ENCODE measurements at regions of chr3 and their contacts with region 1.

Region 1: DNA sequence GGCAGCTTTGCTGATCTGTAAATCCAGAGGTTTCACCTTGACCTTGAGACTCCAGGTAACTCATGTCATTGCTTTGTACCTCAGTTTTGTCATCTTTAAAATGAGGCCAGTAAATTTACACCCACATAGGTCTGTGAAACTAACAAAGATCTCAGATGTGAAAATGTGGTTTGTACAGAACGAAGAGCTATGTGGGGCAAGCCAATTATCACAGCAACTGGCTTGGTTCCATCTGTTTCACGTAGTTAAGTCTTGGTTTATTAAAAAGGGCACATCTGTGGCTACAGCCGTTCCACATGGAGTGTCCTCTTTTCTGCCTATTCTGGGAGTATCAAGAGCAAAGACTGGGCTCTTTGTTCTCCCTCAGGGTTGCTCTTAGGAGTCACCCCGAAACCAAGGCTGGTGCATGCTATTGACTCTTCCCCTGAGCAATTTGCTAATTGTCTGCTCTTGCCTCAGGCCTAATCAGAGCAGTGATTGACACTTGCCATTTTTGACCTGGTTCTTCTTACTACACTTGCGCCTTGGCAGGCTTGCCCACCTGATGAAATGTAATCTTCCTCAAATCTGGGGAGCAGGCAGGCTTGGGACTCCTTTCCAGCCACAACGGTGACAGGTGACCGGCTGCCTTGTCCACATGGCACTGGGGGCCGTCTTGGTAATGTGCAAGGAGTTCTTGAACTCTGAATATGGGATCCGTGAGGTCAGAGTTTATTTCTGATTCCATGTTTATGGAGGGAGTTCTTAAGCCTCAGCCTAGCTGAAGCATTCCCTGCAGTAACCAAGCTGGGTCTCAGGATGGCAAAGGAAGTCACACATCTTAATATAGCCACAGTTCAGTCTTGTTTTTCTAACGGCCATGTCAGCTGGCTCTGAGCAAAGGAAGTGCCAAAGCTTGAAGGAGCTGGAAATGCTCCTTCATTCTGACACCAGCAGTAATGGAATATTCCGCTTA is 40.1 kb downstream of the EAF1 start:
- DNase-seq: peak; percentile 85
- ATAC-seq: peak; percentile 97
- H3K4me3 ChIP-seq: no peak overlapping the region
- H3K27ac ChIP-seq: no peak overlapping the region
- H3K4me1 ChIP-seq: peaks cover 6% of the 10 kb centered on the region
- H3K27me3 ChIP-seq: no peaks in the 10 kb centered on the region
- CTCF ChIP-seq: no peak
- EP300 ChIP-seq: peak; percentile 66 to 78; a peak in 2 of 4 replicates
- POLR2A ChIP-seq: no peak
- RAD21 ChIP-seq: no peak

Region 2: DNA sequence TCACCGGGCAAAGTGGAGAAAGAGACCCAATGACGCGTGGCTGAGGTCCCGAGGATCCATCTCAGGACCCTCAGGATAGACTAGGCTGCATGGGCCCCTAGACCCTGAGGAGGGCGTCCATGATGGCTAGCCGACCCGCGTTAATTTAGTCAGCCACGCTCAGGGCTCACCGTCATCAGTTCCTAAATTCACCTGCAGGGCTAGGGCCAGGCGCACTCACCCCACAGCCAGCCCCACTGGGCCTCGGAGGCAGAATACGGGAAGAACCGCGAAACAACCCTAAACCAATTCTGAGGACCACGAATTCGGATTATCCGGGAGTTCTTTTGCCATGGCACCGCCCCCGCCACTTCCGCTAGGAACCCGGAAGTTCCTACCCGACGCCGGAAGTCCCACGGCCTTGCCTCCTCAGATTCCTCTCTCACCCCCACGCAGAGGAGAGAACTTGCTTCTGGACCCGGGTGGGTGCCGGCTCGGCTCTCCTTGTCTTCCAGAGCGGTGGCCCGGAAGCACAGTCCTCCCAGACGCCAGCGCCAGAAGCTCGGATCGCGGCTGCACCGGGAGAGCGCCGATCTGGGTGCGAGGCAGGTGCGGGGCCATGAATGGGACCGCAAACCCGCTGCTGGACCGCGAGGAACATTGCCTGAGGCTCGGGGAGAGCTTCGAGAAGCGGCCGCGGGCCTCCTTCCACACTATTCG is 40.2 kb before region 1 on chr3 and contains the starts of genes EAF1 and METTL6:
- CTCF ChIA-PET with region 1: interaction called, 6 read pairs
- POLR2A ChIA-PET with region 1: interaction called, 3 read pairs
- RAD21 ChIA-PET with region 1: interaction called, 9 read pairs
- SMC1A ChIA-PET with region 1: interaction called, 22 read pairs
- in situ Hi-C with region 1: no loop called
- intact Hi-C with region 1: no loop called
- DNase-seq: peak; percentile 38
- ATAC-seq: peak; percentile 88
- H3K4me3 ChIP-seq: peak within 1 kb of the TSS; percentile 95
- H3K27ac ChIP-seq: peak within 1 kb of the TSS; percentile 81
- H3K4me1 ChIP-seq: no peaks in the 10 kb centered on the region; the same call in 1 of the 2 replicates
- H3K27me3 ChIP-seq: no peaks in the 10 kb centered on the region
- CTCF ChIP-seq: peak in 1 of 3 experiments; percentile 15; a peak in 1 of 6 replicates
- EP300 ChIP-seq: 0 out of 4 replicates have a peak, but pooled peaks of 1 of the 2 experiments have one; percentile 10
- POLR2A ChIP-seq: peak; percentile 85
- RAD21 ChIP-seq: no peak
- polyA plus RNA-seq, gene EAF1: 6.8 to 9.2 TPM
- polyA plus RNA-seq, gene METTL6: 27.4 to 29.6 TPM

Region 3: DNA sequence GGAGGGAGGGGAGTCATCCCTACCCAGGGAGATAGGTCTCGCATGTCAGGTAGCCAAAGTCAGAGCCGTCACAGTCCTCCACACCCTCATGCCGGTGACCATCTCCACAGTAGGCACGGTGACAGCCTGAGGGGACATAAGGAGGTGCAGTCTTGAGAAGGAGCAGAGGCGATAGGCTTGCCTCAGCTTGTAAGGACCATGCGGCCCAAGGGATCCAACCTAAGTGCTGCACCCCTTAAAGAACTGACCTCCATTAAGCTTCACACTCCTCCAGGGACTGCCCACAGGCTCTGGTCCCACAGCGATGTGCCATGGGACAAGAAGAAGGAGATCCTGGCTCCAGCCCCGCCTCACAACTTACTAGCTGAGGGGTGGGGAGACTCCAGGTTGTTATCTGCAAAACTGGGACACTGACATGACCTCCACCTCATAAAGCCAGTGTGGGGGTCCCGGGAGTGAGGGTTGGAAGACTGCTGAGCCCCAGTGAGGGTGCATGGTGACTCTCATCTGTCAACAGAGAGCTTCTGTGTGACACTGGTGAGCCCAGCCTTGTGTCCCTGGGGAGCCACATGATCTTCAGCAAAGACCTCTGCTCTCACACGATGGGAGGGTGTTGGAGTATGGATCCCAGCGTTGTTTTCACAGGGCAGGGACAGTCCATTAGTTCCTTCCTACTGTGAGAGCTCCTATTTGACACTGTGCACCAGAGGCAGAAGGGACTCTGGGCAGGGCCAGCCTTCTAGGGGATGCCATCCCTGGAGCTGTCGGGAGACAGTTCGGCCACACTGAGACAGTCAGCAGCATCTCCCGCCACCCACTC is 13.5 kb before region 1 on chr3:
- CTCF ChIA-PET with region 1: interaction called, 10 read pairs
- POLR2A ChIA-PET with region 1: interaction called, 5 read pairs
- RAD21 ChIA-PET with region 1: interaction called, 3 read pairs
- SMC1A ChIA-PET with region 1: interaction called, 5 read pairs
- in situ Hi-C with region 1: no loop called
- intact Hi-C with region 1: no loop called
- DNase-seq: no peak
- ATAC-seq: no peak
- H3K4me3 ChIP-seq: no peak overlapping the region
- H3K27ac ChIP-seq: no peak overlapping the region
- H3K4me1 ChIP-seq: no peaks in the 10 kb centered on the region
- H3K27me3 ChIP-seq: no peaks in the 10 kb centered on the region
- CTCF ChIP-seq: no peak
- EP300 ChIP-seq: no peak
- POLR2A ChIP-seq: no peak
- RAD21 ChIP-seq: no peak

Region 4: DNA sequence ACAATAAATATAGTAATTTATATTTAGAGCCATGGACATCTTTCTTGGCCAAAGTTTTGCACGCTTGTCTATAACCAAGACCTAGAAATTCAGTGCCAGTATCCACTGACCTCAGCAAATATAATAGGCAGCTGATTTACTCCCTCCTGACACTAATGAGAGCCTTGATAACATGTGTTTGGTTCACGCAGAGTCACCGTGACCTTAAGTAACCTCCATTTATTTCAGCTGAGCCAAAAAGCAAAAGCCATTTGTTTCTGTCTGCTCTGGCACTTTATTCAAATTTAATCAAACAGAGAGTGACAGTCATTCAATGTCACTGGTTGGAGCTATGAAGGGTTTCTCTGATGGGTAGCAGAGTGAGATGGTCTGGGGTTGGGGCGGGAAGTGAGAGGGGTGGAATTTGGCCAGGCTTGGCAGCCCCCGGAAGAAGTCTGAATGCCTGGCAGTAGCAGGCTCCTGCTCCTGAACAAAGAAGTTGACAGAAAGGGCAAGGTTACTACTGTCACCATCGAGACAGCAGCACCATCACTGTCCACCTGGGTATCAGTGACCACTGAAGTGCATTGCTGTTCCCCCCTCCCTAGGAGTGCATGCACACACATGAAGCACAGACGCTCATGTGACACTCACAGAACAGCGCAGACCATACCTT is 10.9 kb after region 1 on chr3:
- CTCF ChIA-PET with region 1: interaction called, 10 read pairs
- POLR2A ChIA-PET with region 1: no interaction called
- RAD21 ChIA-PET with region 1: interaction called, 3 read pairs
- SMC1A ChIA-PET with region 1: interaction called, 4 read pairs
- in situ Hi-C with region 1: no loop called
- intact Hi-C with region 1: no loop called
- DNase-seq: no peak
- ATAC-seq: no peak
- H3K4me3 ChIP-seq: no peak overlapping the region
- H3K27ac ChIP-seq: no peak overlapping the region
- H3K4me1 ChIP-seq: no peaks in the 10 kb centered on the region
- H3K27me3 ChIP-seq: no peaks in the 10 kb centered on the region
- CTCF ChIP-seq: no peak
- EP300 ChIP-seq: no peak
- POLR2A ChIP-seq: no peak
- RAD21 ChIP-seq: no peak

Region 5: DNA sequence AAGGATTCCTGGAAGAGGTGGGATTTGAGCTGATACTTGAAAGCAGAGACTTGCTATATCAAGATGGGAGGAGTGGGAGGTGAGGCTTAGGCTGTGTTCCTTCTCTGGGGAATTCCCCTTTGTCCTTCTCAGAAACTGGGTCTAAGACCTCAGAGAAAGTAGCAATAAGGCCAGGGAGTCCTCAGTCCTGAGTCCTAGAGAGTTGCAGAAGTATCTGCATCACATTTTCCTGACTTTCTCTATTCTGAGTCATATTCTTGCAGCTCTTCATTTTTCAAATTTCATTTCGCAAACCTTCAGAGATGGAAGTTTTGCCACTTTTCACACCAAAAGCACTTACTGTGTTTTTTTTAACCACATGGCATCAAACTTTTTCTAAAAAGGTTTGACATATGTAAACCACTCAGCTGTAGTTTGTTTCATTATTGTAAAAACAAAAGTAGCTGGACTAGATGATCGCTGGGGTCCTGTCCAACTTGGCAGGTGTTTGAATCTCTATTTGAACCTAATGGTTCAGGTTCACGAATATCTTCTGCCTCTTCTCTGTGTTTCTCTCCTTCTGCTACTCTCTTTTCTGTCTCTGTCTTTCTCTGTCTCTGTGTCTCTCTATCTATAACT is 32.7 kb after region 1 on chr3:
- CTCF ChIA-PET with region 1: interaction called, 7 read pairs
- POLR2A ChIA-PET with region 1: interaction called, 3 read pairs
- RAD21 ChIA-PET with region 1: interaction called, 5 read pairs
- SMC1A ChIA-PET with region 1: interaction called, 16 read pairs
- in situ Hi-C with region 1: no loop called
- intact Hi-C with region 1: no loop called
- DNase-seq: no peak
- ATAC-seq: peak; percentile 66
- H3K4me3 ChIP-seq: no peak overlapping the region
- H3K27ac ChIP-seq: no peak overlapping the region
- H3K4me1 ChIP-seq: peaks cover 17% of the 10 kb centered on the region
- H3K27me3 ChIP-seq: no peaks in the 10 kb centered on the region
- CTCF ChIP-seq: no peak
- EP300 ChIP-seq: no peak
- POLR2A ChIP-seq: no peak
- RAD21 ChIP-seq: no peak

Region 6: DNA sequence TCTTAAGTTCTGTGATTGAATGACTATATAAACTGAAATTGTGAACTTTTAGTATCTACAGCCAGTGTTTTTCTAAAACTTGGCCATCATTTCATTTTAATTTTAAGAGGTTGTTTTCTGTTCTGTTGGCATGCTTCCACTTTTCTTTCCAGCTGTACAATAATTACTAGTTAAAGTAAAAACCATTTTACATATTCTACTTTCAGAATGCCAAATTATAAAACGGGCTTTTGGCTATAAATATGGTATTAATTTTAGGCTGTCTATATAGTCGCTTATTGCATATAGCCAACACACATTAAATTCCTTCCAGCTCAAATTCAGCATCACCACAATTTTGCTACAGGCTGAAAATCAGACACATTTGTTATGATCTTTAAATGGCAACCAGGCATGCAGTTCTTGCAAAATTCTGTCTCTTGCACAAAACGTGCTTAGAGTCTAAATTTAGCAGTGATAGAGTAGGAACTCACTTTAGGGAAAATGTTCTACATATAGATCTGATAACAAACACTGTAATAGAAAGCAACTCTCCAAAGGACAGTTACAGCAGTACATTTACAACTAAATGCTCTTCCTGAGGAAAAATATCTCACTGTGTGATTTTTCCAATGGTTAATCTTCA is 215.2 kb after region 1 on chr3:
- CTCF ChIA-PET with region 1: no interaction called
- POLR2A ChIA-PET with region 1: no interaction called
- RAD21 ChIA-PET with region 1: no interaction called
- SMC1A ChIA-PET with region 1: no interaction called
- in situ Hi-C with region 1: no loop called
- intact Hi-C with region 1: no loop called
- DNase-seq: no peak
- ATAC-seq: no peak
- H3K4me3 ChIP-seq: no peak overlapping the region
- H3K27ac ChIP-seq: no peak overlapping the region; the same call in 1 of the 2 replicates
- H3K4me1 ChIP-seq: no peaks in the 10 kb centered on the region
- H3K27me3 ChIP-seq: no peaks in the 10 kb centered on the region
- CTCF ChIP-seq: no peak
- EP300 ChIP-seq: no peak
- POLR2A ChIP-seq: no peak
- RAD21 ChIP-seq: no peak